ENCODE measurements at regions of chr1 and their contacts with region 1.

Region 1: DNA sequence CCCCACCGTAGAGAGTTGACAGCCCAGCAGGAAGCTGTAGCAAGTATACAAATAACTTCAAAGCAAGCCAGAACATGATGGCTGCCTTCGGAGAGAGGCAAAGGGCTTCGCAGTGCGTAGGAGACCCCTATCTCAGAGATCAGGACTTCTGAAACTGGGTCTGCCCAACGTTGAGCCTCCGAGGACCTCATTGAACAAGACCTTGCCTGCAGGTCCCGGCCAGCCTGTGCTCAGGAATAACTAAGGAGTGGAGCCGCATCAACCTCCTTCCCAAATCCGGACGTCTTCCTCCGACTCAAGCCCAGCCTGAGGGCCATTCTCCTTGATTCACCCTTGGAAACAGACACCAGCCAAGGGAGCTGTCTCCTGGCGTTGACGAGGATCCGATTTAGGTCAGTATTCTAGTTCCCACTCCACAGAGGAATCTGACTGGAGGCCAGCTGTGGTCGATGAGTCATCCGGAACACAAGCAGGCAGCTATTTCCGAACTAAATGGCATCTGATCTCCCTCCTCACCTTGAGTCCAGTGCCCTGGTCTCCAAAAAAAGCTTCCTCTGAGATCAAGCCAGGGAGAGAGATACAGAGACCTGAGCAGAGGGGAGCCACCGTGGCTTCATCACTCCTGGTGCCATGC is 166.5 kb upstream of the COA6 start:
- DNase-seq: peak; percentile 90 to 95
- ATAC-seq: peak; percentile 100
- H3K4me3 ChIP-seq: no peak overlapping the region
- H3K27ac ChIP-seq: peak overlapping the region; percentile 55 to 65 (median 60)
- H3K4me1 ChIP-seq: peaks cover 17 to 20% of the 10 kb centered on the region in 2 donors
- H3K27me3 ChIP-seq: no peaks in the 10 kb centered on the region
- CTCF ChIP-seq: no peak
- POLR2A ChIP-seq: no peak

Region 2: DNA sequence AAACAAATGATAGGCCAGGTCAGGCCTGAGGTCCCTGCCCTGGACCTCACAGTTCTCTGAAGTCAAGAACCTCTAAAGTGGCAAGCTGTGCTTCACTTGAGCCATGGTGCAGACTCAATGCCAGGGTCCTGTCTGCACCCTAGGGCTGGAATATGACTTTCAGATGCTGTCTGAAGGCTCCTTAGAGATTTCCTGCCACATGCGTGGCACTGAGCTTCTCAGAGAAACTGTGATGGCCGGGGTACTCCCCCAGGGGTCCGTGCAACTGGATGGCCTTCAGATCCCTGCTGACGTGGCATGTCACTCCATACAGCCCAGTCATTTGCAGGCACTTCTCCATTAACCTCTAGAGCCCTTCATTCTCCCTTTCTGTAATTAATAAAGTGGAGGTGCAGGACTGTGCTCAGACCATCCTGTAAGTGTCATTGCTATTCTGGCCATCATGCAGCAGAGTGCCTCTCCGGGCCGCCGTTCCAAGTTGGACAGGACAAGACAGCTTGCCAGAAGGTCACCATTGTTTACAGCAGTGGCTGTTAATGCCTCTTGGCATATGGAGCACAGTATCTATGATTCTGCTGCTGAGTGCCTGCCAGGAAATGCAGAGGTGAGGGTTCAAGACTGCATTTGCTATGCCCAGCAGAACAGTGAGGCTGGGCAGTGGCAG is 38.6 kb before region 1 on chr1:
- in situ Hi-C with region 1: no loop called
- intact Hi-C with region 1: loop called (anchors 2 kb)
- DNase-seq: peak in 1 of 2 donors; percentile 23
- ATAC-seq: peak; percentile 60 to 78
- H3K4me3 ChIP-seq: no peak overlapping the region
- H3K27ac ChIP-seq: peak overlapping the region in 2 of 4 donors; percentile 37 to 56
- H3K4me1 ChIP-seq: peaks cover 6 to 19% of the 10 kb centered on the region in 2 donors
- H3K27me3 ChIP-seq: no peaks in the 10 kb centered on the region
- CTCF ChIP-seq: no peak
- POLR2A ChIP-seq: no peak

Region 3: GRCh38 chr1:234188454-234188792 is 18.3 kb before region 1 on chr1:
- in situ Hi-C with region 1: no loop called
- intact Hi-C with region 1: loop called (anchors 2 kb)
- DNase-seq: no peak
- ATAC-seq: no peak
- H3K4me3 ChIP-seq: no peak overlapping the region
- H3K27ac ChIP-seq: no peak overlapping the region
- H3K4me1 ChIP-seq: peaks cover 0 to 7% of the 10 kb centered on the region in 2 donors
- H3K27me3 ChIP-seq: no peaks in the 10 kb centered on the region
- CTCF ChIP-seq: no peak
- POLR2A ChIP-seq: no peak